Activated CD4-positive, alpha-beta memory T cell treated with anti-CD3 and anti-CD28 coated beads for 36 hours (primary cell): ENCODE measurements at regions of chr5 and their contacts with region 1.

Region 1: DNA sequence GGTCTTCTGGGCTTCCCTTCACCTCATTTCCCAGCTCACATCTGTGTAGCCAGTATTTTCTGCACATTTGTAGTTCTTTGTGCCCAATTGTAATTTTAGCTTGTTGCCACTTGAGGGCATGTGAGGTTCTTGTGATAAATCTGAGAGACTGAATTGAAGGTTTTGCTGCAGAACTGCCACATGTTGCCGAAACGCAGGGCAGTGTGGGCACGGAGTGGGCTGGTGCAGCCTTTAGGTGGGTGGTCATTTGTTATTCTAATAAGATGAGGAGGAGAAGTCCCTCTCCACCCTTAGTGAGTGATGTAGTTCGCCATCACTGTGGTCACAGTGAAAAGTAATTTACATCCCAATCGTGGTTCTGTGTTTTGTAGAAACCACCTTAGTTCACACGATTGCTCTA is 21.2 kb downstream of the OTULIN start:
- DNase-seq: peak; percentile 71
- H3K4me3 Mint-ChIP-seq: no peak overlapping the region
- H3K27ac Mint-ChIP-seq: peak overlapping the region; percentile 59
- H3K4me1 Mint-ChIP-seq: peaks cover 15% of the 10 kb centered on the region
- H3K27me3 Mint-ChIP-seq: no peaks in the 10 kb centered on the region

Region 2: GRCh38 chr5:14696057-14696456 is 10.3 kb after region 1 on chr5:
- CTCF ChIA-PET with region 1: interaction called, 11 read pairs
- POLR2A ChIA-PET with region 1: no interaction called
- intact Hi-C with region 1: no loop called
- DNase-seq: no peak
- H3K4me3 Mint-ChIP-seq: no peak overlapping the region
- H3K27ac Mint-ChIP-seq: no peak overlapping the region
- H3K4me1 Mint-ChIP-seq: peaks cover 33% of the 10 kb centered on the region
- H3K27me3 Mint-ChIP-seq: no peaks in the 10 kb centered on the region

Region 3: GRCh38 chr5:14706615-14707021 is 20.9 kb after region 1 on chr5:
- CTCF ChIA-PET with region 1: interaction called, 21 read pairs
- POLR2A ChIA-PET with region 1: interaction called, 3 read pairs
- intact Hi-C with region 1: loop called (anchors 1 kb)
- DNase-seq: peak; percentile 56
- H3K4me3 Mint-ChIP-seq: peak overlapping the region; percentile 57
- H3K27ac Mint-ChIP-seq: peak overlapping the region; percentile 94
- H3K4me1 Mint-ChIP-seq: peaks cover 74% of the 10 kb centered on the region
- H3K27me3 Mint-ChIP-seq: no peaks in the 10 kb centered on the region

Region 4: GRCh38 chr5:14720236-14720971 is 34.6 kb after region 1 on chr5:
- CTCF ChIA-PET with region 1: interaction called, 6 read pairs
- POLR2A ChIA-PET with region 1: no interaction called
- intact Hi-C with region 1: loop called (anchors 1 kb)
- DNase-seq: no peak
- H3K4me3 Mint-ChIP-seq: no peak overlapping the region
- H3K27ac Mint-ChIP-seq: peak overlapping the region; percentile 19
- H3K4me1 Mint-ChIP-seq: peaks cover 46% of the 10 kb centered on the region
- H3K27me3 Mint-ChIP-seq: no peaks in the 10 kb centered on the region

Region 5: GRCh38 chr5:14739538-14739937 is 53.8 kb after region 1 on chr5:
- CTCF ChIA-PET with region 1: no interaction called
- POLR2A ChIA-PET with region 1: no interaction called
- intact Hi-C with region 1: no loop called
- DNase-seq: no peak
- H3K4me3 Mint-ChIP-seq: no peak overlapping the region
- H3K27ac Mint-ChIP-seq: no peak overlapping the region
- H3K4me1 Mint-ChIP-seq: no peaks in the 10 kb centered on the region
- H3K27me3 Mint-ChIP-seq: no peaks in the 10 kb centered on the region